ENCODE measurements at regions of chr6 and their contacts with region 1.

Region 1: DNA sequence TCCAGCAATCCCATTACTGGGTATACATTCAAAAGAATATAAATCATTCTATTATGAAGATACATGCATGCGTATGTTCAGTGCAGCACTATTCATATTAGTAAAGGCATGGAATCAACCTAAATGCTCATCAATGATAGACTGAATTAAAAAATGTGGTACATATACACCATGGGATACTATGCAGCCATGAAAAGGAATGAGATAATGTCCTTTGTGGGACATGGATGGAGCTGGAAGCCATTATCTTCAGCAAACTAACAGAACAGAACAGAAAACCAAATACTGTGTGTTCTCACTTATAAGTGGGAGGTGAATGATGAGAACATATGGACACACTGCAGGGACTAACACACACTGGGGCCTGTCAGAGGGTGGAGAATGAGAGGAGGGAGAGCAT is 261.6 kb downstream of the GMDS start:
- DNase-seq: no peak
- ATAC-seq: no peak
- H3K4me3 ChIP-seq: no peak overlapping the region
- H3K4me3 Mint-ChIP-seq: no peak overlapping the region
- H3K27ac ChIP-seq: no peak overlapping the region
- H3K27ac Mint-ChIP-seq: peak overlapping the region; percentile 34
- H3K4me1 ChIP-seq: no peaks in the 10 kb centered on the region
- H3K4me1 Mint-ChIP-seq: no peaks in the 10 kb centered on the region
- H3K27me3 ChIP-seq: no peaks in the 10 kb centered on the region
- H3K27me3 Mint-ChIP-seq: no peaks in the 10 kb centered on the region
- CTCF ChIP-seq: no peak

Region 2: GRCh38 chr6:1396952-1397868 is 586.6 kb before region 1 on chr6:
- CTCF ChIA-PET with region 1: no interaction called
- POLR2A ChIA-PET with region 1: no interaction called
- intact Hi-C with region 1: no loop called
- DNase-seq: peak; percentile 38 to 82 (median 66)
- ATAC-seq: peak; percentile 61
- H3K4me3 ChIP-seq: no peak overlapping the region
- H3K4me3 Mint-ChIP-seq: no peak overlapping the region
- H3K27ac ChIP-seq: no peak overlapping the region
- H3K27ac Mint-ChIP-seq: no peak overlapping the region
- H3K4me1 ChIP-seq: peaks cover 3% of the 10 kb centered on the region
- H3K4me1 Mint-ChIP-seq: peaks cover 5% of the 10 kb centered on the region
- H3K27me3 ChIP-seq: peaks cover 5 to 13% of the 10 kb centered on the region in 2 experiments
- H3K27me3 Mint-ChIP-seq: peaks cover 52% of the 10 kb centered on the region
- CTCF ChIP-seq: peak; percentile 86

Region 3: DNA sequence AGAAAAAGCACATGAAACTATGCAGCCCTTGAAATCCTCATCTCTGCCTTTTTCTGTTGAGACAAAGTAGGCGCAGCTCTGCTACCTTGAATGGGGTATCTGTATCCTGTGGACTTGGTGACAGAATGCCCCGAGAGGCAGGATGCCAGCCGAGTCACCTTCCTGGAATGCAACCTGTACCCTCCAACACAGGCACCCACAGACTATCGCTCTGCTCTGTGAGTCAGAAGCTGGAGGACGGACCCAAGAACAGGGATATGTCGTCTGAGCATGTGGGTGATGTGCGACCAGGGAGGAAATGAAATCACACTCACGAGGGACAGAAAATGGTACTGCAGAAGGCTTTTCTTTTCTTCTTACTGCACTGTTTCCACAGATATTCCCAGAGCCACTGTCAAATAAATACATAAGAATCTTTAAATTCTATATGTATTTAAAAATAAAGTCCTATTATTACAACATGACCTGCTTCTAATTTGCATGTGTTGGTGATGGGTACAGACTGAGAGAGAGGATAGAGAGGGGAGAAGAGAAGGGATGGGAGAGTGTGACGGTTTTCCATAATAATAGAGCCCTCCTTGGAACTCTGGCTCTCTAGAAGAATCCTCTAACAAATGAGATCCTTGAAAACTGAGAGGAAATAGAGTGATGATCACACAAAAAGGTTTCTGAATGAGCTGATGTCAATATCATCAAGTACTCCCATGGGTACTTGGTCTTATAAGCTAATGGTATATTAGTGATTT is 66.1 kb before region 1 on chr6:
- CTCF ChIA-PET with region 1: no interaction called
- POLR2A ChIA-PET with region 1: no interaction called
- intact Hi-C with region 1: no loop called
- DNase-seq: peak in 1 of 9 experiments; percentile 6
- ATAC-seq: no peak
- H3K4me3 ChIP-seq: no peak overlapping the region
- H3K4me3 Mint-ChIP-seq: no peak overlapping the region
- H3K27ac ChIP-seq: no peak overlapping the region
- H3K27ac Mint-ChIP-seq: no peak overlapping the region
- H3K4me1 ChIP-seq: no peaks in the 10 kb centered on the region
- H3K4me1 Mint-ChIP-seq: no peaks in the 10 kb centered on the region
- H3K27me3 ChIP-seq: no peaks in the 10 kb centered on the region
- H3K27me3 Mint-ChIP-seq: no peaks in the 10 kb centered on the region
- CTCF ChIP-seq: no peak

Region 4: GRCh38 chr6:1995651-1996103 is 11.8 kb after region 1 on chr6:
- CTCF ChIA-PET with region 1: no interaction called
- POLR2A ChIA-PET with region 1: no interaction called
- intact Hi-C with region 1: loop called in 1 of 2 experiments (anchors 2 kb)
- DNase-seq: no peak
- ATAC-seq: no peak
- H3K4me3 ChIP-seq: no peak overlapping the region
- H3K4me3 Mint-ChIP-seq: no peak overlapping the region
- H3K27ac ChIP-seq: no peak overlapping the region
- H3K27ac Mint-ChIP-seq: no peak overlapping the region
- H3K4me1 ChIP-seq: no peaks in the 10 kb centered on the region
- H3K4me1 Mint-ChIP-seq: no peaks in the 10 kb centered on the region
- H3K27me3 ChIP-seq: no peaks in the 10 kb centered on the region
- H3K27me3 Mint-ChIP-seq: no peaks in the 10 kb centered on the region
- CTCF ChIP-seq: no peak